ENCODE measurements at regions of chr17 and their contacts with region 1.

Region 1: DNA sequence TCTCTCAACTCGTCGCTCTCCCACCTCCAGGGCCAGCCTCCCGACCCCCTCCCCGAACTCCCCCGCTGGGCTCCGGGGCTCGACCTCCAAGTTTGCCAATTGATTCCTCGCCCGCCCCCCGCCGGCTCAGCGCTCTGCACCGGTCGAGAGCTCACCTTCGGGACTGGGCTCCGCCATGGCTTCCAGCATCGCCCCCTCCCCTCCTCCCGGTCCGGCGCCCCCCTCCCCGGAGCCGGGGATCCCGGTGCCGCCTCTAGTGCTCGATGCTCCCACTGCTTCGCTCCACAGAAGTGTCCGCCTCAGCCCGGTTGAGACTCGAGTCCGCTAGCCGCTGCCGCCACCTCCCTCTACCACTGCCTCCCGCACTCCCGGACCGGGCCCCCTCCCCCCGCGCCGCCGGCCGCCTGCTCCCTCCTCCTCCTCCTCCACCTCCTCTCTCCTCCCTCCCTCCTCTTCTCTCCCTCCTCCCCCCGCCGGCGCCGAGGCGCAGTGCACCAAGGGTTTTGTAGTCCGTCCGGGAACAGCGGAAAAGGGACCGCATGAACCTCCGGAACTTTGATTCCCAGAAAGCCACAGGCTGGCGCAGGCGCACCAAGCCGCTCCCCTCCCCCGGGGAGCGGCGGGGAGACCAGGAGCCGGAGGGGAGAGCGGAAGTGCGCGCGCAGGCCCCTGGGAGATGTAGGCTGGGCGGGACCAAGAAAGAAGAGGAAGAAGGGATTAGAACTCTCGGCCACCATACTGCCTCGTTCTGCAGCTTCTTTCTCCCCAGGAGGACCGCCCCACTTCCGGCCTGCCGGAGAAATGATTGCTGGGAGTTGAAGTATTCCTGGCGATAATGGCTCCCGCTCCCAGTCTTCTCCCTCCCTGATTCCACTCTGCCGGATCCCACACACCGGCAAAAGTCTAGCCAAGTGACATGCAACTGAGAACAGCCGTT is at the start of gene PHF23:
- DNase-seq: peak; percentile 99
- H3K4me3 Mint-ChIP-seq: peak within 1 kb of the TSS; percentile 100
- H3K27ac Mint-ChIP-seq: peak within 1 kb of the TSS; percentile 91
- H3K4me1 Mint-ChIP-seq: peaks cover 47% of the 10 kb centered on the region
- H3K27me3 Mint-ChIP-seq: no peaks in the 10 kb centered on the region
- CTCF ChIP-seq: no peak
- total RNA-seq, gene PHF23: 41.8 and 47.1 TPM in 2 replicates

Region 2: GRCh38 chr17:7219812-7220581 is 19.4 kb before region 1 on chr17 and contains the starts of genes ACADVL and DLG4:
- CTCF ChIA-PET with region 1: interaction called, 9 read pairs
- POLR2A ChIA-PET with region 1: interaction called, 278 read pairs
- intact Hi-C with region 1: no loop called
- DNase-seq: peak; percentile 94
- H3K4me3 Mint-ChIP-seq: peak within 1 kb of the TSS; percentile 86
- H3K27ac Mint-ChIP-seq: peak within 1 kb of the TSS; percentile 96
- H3K4me1 Mint-ChIP-seq: peaks cover 37% of the 10 kb centered on the region
- H3K27me3 Mint-ChIP-seq: no peaks in the 10 kb centered on the region
- CTCF ChIP-seq: no peak
- total RNA-seq, gene ACADVL: 387 and 413 TPM in 2 replicates
- total RNA-seq, gene DLG4: 7.6 TPM in 2 replicates

Region 3: GRCh38 chr17:7252176-7253043 is 13.1 kb after region 1 on chr17 and contains the start of gene ELP5:
- CTCF ChIA-PET with region 1: interaction called, 4 read pairs
- POLR2A ChIA-PET with region 1: interaction called, 128 read pairs
- intact Hi-C with region 1: no loop called
- DNase-seq: peak; percentile 94
- H3K4me3 Mint-ChIP-seq: peak within 1 kb of the TSS; percentile 92
- H3K27ac Mint-ChIP-seq: peak within 1 kb of the TSS; percentile 99
- H3K4me1 Mint-ChIP-seq: peaks cover 25% of the 10 kb centered on the region
- H3K27me3 Mint-ChIP-seq: no peaks in the 10 kb centered on the region
- CTCF ChIP-seq: no peak
- total RNA-seq, gene ELP5: 81.0 and 91.3 TPM in 2 replicates

Region 4: GRCh38 chr17:7261172-7261927 is 22.0 kb after region 1 on chr17:
- CTCF ChIA-PET with region 1: no interaction called
- POLR2A ChIA-PET with region 1: interaction called, 92 read pairs
- intact Hi-C with region 1: no loop called
- DNase-seq: peak; percentile 87
- H3K4me3 Mint-ChIP-seq: peak overlapping the region; percentile 73
- H3K27ac Mint-ChIP-seq: peak overlapping the region; percentile 79
- H3K4me1 Mint-ChIP-seq: peaks cover 36% of the 10 kb centered on the region
- H3K27me3 Mint-ChIP-seq: no peaks in the 10 kb centered on the region
- CTCF ChIP-seq: no peak

Region 5: DNA sequence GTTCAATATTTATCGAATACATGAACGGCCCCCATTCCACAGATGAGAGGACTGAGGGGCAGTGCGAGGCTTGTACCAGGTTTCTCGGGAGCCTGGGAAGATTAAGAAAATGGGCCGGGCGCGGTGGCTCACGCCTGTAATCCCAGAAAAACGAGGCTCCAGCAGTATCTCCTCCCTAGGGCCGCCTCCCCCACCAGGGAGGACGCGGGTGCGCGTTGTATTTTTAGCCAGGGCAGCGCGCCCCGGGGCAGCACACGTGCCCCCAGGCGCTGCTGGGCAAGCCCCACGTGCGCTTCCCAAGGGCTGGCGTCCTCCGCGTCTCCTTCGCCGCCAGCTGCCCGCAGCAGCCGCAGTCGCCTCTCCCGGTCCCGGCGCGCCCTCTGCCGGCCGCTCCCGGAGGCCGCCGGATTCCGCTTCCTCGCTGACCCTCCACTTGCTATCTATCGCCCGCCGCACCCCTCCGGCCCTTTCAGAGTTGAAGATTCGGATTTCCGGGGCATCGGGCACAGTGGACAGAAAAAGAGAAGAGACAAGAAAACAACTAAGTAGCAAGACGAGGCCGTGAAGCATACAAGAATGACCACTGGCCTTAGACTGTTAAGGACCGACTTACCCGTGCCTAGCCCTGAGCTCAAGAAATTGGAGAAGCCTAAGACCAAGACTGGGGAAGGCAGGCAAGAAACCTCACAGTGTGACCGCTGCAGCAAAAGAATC is 57.0 kb after region 1 on chr17:
- CTCF ChIA-PET with region 1: interaction called, 9 read pairs
- POLR2A ChIA-PET with region 1: interaction called, 13 read pairs
- intact Hi-C with region 1: no loop called
- DNase-seq: peak; percentile 73
- H3K4me3 Mint-ChIP-seq: no peak overlapping the region
- H3K27ac Mint-ChIP-seq: no peak overlapping the region
- H3K4me1 Mint-ChIP-seq: peaks cover 17% of the 10 kb centered on the region
- H3K27me3 Mint-ChIP-seq: no peaks in the 10 kb centered on the region
- CTCF ChIP-seq: peak; percentile 91

Region 6: GRCh38 chr17:7306911-7307686 is 67.7 kb after region 1 on chr17 and contains the start of gene EIF5A:
- CTCF ChIA-PET with region 1: no interaction called
- POLR2A ChIA-PET with region 1: interaction called, 11 read pairs
- intact Hi-C with region 1: no loop called
- DNase-seq: peak; percentile 100
- H3K4me3 Mint-ChIP-seq: peak within 1 kb of the TSS; percentile 88
- H3K27ac Mint-ChIP-seq: peak within 1 kb of the TSS; percentile 90
- H3K4me1 Mint-ChIP-seq: peaks cover 24% of the 10 kb centered on the region
- H3K27me3 Mint-ChIP-seq: no peaks in the 10 kb centered on the region
- CTCF ChIP-seq: no peak
- total RNA-seq, gene EIF5A: 1,142 and 1,190 TPM in 2 replicates

Region 7: GRCh38 chr17:7314719-7315569 is 75.6 kb after region 1 on chr17 and contains the start of gene GPS2:
- CTCF ChIA-PET with region 1: interaction called, 3 read pairs
- POLR2A ChIA-PET with region 1: interaction called, 15 read pairs
- intact Hi-C with region 1: no loop called
- DNase-seq: peak; percentile 86
- H3K4me3 Mint-ChIP-seq: peak within 1 kb of the TSS; percentile 85
- H3K27ac Mint-ChIP-seq: peak within 1 kb of the TSS; percentile 84
- H3K4me1 Mint-ChIP-seq: peaks cover 36% of the 10 kb centered on the region
- H3K27me3 Mint-ChIP-seq: no peaks in the 10 kb centered on the region
- CTCF ChIP-seq: no peak
- total RNA-seq, gene GPS2: 29.4 and 49.8 TPM in 2 replicates

Measured in MCF 10A (cell line).